Activated CD8-positive, alpha-beta T cell treated with anti-CD3 and anti-CD28 coated beads for 36 hours (primary cell): ENCODE measurements at regions of chr6 and their contacts with region 1.

Region 1: GRCh38 chr6:35327349-35328027 is 14.9 kb upstream of the PPARD start:
- DNase-seq: peak; percentile 88
- ATAC-seq: peak; percentile 95
- H3K4me3 Mint-ChIP-seq: no peak overlapping the region
- H3K27ac Mint-ChIP-seq: peak overlapping the region; percentile 68
- H3K4me1 Mint-ChIP-seq: peaks cover 18% of the 10 kb centered on the region
- H3K27me3 Mint-ChIP-seq: no peaks in the 10 kb centered on the region
- CTCF ChIP-seq: peak; percentile 76

Region 2: DNA sequence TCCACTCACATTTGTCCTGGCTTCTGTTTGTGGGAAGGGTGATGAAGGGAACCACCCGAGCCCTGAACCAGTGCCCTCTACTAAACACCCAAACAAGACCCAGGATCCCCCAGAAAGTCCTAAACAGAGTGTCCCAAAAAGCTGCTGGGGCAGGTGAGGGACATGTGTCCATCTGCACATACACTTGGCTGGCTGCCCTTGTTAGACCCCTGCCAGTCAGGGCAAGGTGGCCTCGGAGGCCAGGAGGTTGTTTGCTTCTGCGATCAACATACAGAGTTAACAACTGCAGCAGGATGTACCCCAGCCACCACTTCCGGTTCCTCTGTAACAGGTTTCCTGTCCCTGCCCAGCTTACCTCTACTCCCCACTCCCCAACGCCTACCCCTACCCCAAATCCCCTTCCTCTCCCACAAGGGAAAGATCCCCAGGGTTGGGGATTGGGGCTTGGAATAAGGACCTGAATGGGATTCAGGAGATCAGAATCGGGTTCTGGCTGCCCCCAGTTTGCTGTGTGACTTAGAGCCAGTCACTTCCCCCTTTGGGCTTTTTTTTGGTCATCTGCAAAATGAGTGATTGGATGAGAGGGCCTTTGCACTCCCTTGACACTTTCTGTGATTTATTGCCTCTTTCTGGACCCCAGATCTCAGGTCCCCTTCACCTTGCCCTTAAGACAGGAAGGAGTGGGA is 16.0 kb before region 1 on chr6:
- CTCF ChIA-PET with region 1: interaction called, 35 read pairs
- POLR2A ChIA-PET with region 1: interaction called, 7 read pairs
- intact Hi-C with region 1: no loop called
- DNase-seq: peak; percentile 64
- ATAC-seq: peak; percentile 70
- H3K4me3 Mint-ChIP-seq: peak overlapping the region; percentile 57
- H3K27ac Mint-ChIP-seq: peak overlapping the region; percentile 96
- H3K4me1 Mint-ChIP-seq: peaks cover 87% of the 10 kb centered on the region
- H3K27me3 Mint-ChIP-seq: no peaks in the 10 kb centered on the region
- CTCF ChIP-seq: no peak

Region 3: DNA sequence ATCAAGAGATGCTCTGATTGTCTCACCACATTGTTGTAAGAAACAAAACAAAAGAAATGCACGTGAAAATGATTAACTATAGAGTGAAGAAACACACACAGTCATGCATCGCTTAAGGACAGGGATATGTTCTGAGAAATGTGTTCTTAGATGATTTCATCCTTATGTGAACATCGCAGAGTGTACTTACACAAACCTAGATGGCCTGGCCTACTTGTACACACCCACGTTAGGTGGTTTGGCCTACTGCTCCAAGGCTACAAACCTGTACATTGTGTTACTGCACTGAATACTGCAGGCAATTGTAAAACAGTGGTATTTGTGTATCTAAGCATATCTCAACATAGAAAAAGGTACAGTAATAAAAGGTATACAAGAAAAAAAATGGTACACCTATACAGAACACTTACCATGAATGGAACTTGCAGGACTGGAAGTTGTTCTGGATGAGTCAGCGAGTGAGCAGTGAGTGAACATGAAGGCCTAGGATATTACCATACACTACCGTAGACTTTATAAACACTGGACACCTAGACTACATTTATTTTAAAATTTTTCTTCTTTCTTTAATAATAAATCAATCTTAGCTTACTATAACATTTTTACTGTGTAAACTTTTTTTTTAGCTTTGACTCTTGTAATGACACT is 312.7 kb after region 1 on chr6:
- CTCF ChIA-PET with region 1: no interaction called
- POLR2A ChIA-PET with region 1: no interaction called
- intact Hi-C with region 1: no loop called
- DNase-seq: no peak
- ATAC-seq: no peak
- H3K4me3 Mint-ChIP-seq: no peak overlapping the region
- H3K27ac Mint-ChIP-seq: peak overlapping the region; percentile 8
- H3K4me1 Mint-ChIP-seq: peaks cover 64% of the 10 kb centered on the region
- H3K27me3 Mint-ChIP-seq: no peaks in the 10 kb centered on the region
- CTCF ChIP-seq: no peak